ENCODE measurements at regions of chr16 and their contacts with region 1.

Region 1: GRCh38 chr16:72066747-72067146 is 3.7 kb downstream of the HPR start:
- DNase-seq: no peak
- ATAC-seq: peak; percentile 48 to 53
- H3K4me3 ChIP-seq: no peak overlapping the region
- H3K27ac ChIP-seq: no peak overlapping the region
- H3K4me1 ChIP-seq: peaks cover 5% of the 10 kb centered on the region
- H3K27me3 ChIP-seq: no peaks in the 10 kb centered on the region

Region 2: DNA sequence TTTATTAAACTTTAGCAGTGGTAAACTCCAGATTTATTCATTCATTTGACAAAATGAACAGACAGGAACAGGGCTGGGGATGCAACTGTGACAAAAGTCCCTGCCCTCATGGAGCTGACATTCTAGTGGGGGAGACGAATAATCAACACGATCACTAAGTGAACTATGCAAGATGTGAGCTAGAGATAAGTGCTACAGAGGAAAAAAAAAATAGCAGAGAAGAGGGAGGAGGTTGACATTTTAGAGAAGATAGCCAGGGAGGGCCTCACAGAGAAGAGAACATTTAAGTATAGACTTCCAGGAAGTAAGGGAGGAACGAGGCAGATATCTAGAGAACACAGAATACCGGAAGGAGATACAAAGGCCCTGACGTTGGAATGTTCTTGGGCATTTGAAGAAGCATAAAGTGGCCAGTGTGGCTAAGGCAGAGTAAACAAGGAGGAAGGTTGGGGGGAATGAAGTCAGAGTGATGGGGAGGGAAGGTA is 240.2 kb before region 1 on chr16:
- intact Hi-C with region 1: no loop called
- DNase-seq: no peak
- ATAC-seq: peak in 1 of 2 donors; percentile 91
- H3K4me3 ChIP-seq: no peak overlapping the region
- H3K27ac ChIP-seq: no peak overlapping the region
- H3K4me1 ChIP-seq: no peaks in the 10 kb centered on the region
- H3K27me3 ChIP-seq: no peaks in the 10 kb centered on the region

Region 3: GRCh38 chr16:72104905-72105304 is 38.2 kb after region 1 on chr16:
- intact Hi-C with region 1: loop called in 2 of 4 experiments (anchors 5 kb)
- DNase-seq: no peak
- ATAC-seq: no peak
- H3K4me3 ChIP-seq: no peak overlapping the region
- H3K27ac ChIP-seq: no peak overlapping the region
- H3K4me1 ChIP-seq: no peaks in the 10 kb centered on the region
- H3K27me3 ChIP-seq: no peaks in the 10 kb centered on the region

Measured in right cardiac atrium (tissue), 5 donors.